ENCODE measurements at regions of chr6 and their contacts with region 1.

Region 1: GRCh38 chr6:118509009-118509617 is 39.0 kb upstream of the PLN start:
- DNase-seq: no peak
- H3K4me3 ChIP-seq: no peak overlapping the region
- H3K27ac ChIP-seq: no peak overlapping the region
- H3K4me1 ChIP-seq: peaks cover 0 to 13% (median 5%) of the 10 kb centered on the region in 4 donors
- H3K27me3 ChIP-seq: no peaks in the 10 kb centered on the region
- CTCF ChIP-seq: peak; percentile 15 to 71 (median 43)
- EP300 ChIP-seq: no peak
- POLR2A ChIP-seq: no peak

Region 2: DNA sequence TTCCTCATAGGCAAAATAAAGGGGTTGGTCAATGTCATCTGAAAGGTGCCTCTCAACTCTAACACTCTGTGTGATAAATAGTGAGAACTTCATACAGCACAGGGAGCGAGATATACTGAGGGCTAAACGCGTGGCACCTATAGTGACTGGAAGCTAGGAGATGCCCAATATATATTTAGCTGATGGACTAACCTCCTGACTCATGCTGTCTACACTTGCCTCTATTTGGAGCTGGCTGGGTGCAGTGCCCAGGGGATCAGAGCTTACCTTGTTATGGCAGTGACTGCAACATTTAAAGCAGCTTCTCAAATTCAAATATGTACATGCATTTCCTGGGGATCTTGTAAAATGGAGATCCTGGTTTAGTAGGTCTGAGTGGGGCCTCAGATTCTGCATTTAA is 72.6 kb before region 1 on chr6:
- intact Hi-C with region 1: no loop called
- DNase-seq: no peak
- H3K4me3 ChIP-seq: no peak overlapping the region
- H3K27ac ChIP-seq: no peak overlapping the region
- H3K4me1 ChIP-seq: no peaks in the 10 kb centered on the region
- H3K27me3 ChIP-seq: no peaks in the 10 kb centered on the region
- CTCF ChIP-seq: no peak
- EP300 ChIP-seq: no peak
- POLR2A ChIP-seq: no peak

Region 3: DNA sequence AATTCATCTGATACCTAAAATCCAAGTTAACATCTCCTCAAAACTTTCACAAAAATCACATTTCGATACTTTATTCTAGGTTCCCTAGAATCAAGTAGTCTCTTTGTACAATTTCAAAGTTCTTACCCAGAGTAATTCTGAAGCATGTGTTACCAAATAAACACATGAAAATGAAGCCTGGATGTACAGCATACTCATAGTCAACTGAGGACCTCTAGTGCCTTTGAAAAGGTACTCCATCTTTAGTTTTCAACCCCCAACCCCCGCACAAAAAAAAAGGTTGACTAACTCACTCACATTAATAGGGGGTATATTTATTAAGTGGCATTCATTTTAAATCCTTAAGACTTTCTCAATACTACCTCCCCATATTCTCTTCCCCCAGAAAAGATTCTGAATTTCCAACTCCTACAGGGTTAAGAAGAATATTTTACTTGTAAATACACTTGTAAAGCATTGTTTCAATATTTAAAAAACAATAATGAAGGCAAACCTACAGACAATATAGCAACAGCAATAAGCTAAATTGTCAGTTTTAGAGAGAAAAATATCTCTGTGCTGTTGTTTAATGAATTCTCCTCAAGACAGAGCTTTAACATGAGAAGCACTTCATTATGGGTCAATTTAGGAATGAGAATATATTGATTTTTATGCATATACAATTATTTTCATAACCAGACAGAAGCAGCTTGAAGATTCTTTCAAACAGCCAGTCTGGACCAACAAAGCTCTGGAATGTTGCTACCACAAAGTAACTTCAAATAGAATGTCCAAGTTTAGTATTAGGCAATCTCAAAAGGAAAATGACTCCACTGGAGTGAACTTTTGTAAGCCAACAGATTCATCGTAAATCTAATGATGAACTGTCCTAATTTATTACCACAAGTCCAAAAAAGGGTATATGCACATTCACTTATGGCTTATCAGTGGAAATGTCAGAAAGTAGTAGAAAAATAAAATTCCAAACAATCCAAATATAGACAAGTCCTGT is 42.2 kb after region 1 on chr6:
- intact Hi-C with region 1: loop called (anchors 5 kb)
- DNase-seq: no peak
- H3K4me3 ChIP-seq: peak overlapping the region in 3 of 4 donors; percentile 42 to 59 (median 55)
- H3K27ac ChIP-seq: peak overlapping the region; percentile 58 to 84 (median 78)
- H3K4me1 ChIP-seq: peaks cover 0 to 55% (median 38%) of the 10 kb centered on the region in 4 donors
- H3K27me3 ChIP-seq: no peaks in the 10 kb centered on the region
- CTCF ChIP-seq: peak in 3 of 4 experiments; percentile 49 to 62 (median 56)
- EP300 ChIP-seq: no peak
- POLR2A ChIP-seq: no peak

Region 4: GRCh38 chr6:118580585-118581419 is 71.7 kb after region 1 on chr6:
- intact Hi-C with region 1: loop called (anchors 5 kb)
- DNase-seq: peak; percentile 66
- H3K4me3 ChIP-seq: no peak overlapping the region
- H3K27ac ChIP-seq: peak overlapping the region in 1 of 4 donors; percentile 33
- H3K4me1 ChIP-seq: peaks cover 0 to 16% (median 10%) of the 10 kb centered on the region in 4 donors
- H3K27me3 ChIP-seq: no peaks in the 10 kb centered on the region
- CTCF ChIP-seq: peak; percentile 42 to 71 (median 58)
- EP300 ChIP-seq: no peak
- POLR2A ChIP-seq: no peak